GM10248 (cell line): ENCODE measurements at regions of chr15 and their contacts with region 1.

Region 1: DNA sequence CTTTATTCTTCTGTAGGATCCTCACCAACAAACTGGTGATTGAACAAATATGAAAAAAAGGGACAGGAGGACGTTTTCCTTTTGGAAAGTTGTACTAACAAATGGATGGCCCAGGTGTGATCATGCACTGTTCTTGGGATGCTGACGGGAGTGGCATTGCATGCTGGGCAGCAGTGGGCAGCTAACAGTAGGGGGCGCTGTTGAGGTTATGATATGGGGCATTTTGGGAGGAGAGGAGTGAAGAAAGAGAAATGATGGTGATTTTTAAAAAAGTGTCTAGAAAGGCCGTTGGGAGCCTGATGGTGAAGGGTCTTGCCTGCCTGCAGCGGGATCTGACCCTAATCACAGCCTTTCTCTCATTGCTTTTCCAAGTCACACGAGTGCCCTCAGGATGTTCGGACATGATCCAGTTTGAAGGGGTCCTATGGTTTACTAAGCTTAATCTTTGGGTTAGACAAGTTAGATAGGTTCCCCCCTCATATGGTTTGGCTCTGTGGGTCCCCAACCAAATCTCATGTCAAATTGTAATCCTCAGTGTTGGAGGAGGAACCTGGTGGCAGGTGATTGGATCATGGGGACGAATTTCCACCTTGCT is 46.2 kb upstream of the PRTG start:
- DNase-seq: peak; percentile 41
- CTCF ChIP-seq: peak; percentile 50

Region 2: DNA sequence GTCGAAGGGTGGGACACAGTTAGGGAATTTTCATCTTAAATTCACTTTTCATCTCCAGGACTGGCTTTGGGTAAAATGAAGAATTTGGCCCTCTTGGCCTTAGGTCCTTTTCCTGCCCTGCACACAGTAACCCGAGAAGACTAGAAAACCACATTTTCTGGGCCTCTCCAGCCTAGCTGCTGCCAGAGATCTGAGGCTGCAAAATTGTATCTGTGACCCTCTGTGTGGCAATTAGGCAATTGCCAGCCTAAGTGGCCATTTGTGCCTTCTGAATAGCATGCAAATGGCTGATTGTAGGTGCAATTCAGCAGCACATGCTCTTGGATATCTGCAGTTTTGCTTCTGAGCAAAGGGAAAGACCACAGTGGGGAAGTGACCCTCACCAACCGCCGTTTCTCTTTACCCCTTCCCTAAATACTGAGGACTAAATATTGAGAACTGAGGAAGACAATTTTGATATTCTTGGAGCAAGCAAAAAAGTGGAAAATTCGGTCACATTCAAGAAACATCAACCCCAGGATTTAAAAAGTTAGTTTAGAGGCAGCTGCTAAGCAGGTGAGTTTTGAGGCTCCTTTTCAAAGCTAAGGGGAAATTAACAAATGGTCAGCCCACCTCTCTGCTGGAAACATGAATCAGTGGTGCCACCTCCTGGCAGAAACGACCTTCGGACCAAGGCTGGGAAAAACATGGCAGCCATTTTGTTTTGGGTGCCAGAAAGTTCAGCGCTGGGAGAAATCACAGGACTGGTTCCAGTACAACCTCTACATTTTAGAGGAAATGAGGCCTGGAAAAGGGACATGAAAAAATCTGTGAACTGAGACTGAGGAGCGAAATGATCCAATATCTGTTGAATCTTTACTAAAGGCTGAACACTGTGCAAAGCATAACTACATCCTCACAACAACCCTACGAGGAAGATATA is 10.4 kb after region 1 on chr15:
- CTCF ChIA-PET with region 1: interaction called, 43 read pairs
- POLR2A ChIA-PET with region 1: no interaction called
- DNase-seq: peak; percentile 54
- CTCF ChIP-seq: peak; percentile 60

Region 3: GRCh38 chr15:56869573-56869972 is 1080.4 kb after region 1 on chr15:
- CTCF ChIA-PET with region 1: no interaction called
- POLR2A ChIA-PET with region 1: no interaction called
- DNase-seq: no peak
- CTCF ChIP-seq: peak; percentile 49